Activated CD4-positive, alpha-beta T cell treated with anti-CD3 and anti-CD28 coated beads for 36 hours (primary cell): ENCODE measurements at regions of chr11 and their contacts with region 1.

Region 1: GRCh38 chr11:31798554-31799434 is 12.3 kb downstream of the PAX6 start:
- DNase-seq: peak; percentile 57
- ATAC-seq: peak; percentile 47
- H3K4me3 Mint-ChIP-seq: no peak overlapping the region
- H3K27ac Mint-ChIP-seq: no peak overlapping the region
- H3K4me1 Mint-ChIP-seq: peaks cover 36% of the 10 kb centered on the region
- H3K27me3 Mint-ChIP-seq: peaks cover 74% of the 10 kb centered on the region

Region 2: GRCh38 chr11:31826536-31827438 is 28.0 kb after region 1 on chr11:
- CTCF ChIA-PET with region 1: interaction called, 4 read pairs
- POLR2A ChIA-PET with region 1: no interaction called
- intact Hi-C with region 1: loop called (anchors 1 to 2 kb)
- DNase-seq: no peak
- ATAC-seq: no peak
- H3K4me3 Mint-ChIP-seq: peak overlapping the region; percentile 18
- H3K27ac Mint-ChIP-seq: no peak overlapping the region
- H3K4me1 Mint-ChIP-seq: peaks cover 17% of the 10 kb centered on the region
- H3K27me3 Mint-ChIP-seq: peaks cover 68% of the 10 kb centered on the region